ENCODE measurements at regions of chr10 and their contacts with region 1.

Region 1: DNA sequence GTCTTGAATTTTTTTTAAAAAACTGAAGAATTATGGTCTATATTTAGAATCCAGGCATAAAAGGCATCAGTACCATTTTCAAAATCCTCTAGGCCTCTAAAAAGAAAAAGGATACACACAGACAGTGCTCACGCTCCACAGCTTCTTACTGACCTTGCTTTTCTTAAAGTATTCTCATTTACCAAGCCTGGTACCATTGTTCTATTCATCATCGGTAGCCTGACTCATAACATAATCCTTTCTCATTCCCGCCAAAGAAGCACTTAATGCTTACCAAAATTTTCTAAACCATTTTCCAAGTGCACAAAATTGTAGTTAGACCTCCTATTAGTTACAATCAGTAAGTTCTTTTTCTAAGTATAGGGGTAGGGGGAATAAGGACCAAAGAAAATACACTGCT is 54.6 kb downstream of the ATE1 start:
- DNase-seq: no peak
- H3K4me3 ChIP-seq: no peak overlapping the region
- H3K4me3 Mint-ChIP-seq: no peak overlapping the region
- H3K27ac ChIP-seq: no peak overlapping the region
- H3K27ac Mint-ChIP-seq: peak overlapping the region in 1 of 7 donors; percentile 57
- H3K4me1 ChIP-seq: no peaks in the 10 kb centered on the region
- H3K4me1 Mint-ChIP-seq: no peaks in the 10 kb centered on the region
- H3K27me3 ChIP-seq: no peaks in the 10 kb centered on the region
- H3K27me3 Mint-ChIP-seq: no peaks in the 10 kb centered on the region

Region 2: GRCh38 chr10:121804460-121804859 is 68.8 kb before region 1 on chr10:
- CTCF ChIA-PET with region 1: no interaction called
- POLR2A ChIA-PET with region 1: no interaction called
- intact Hi-C with region 1: loop called (anchors 2 kb)
- DNase-seq: no peak
- H3K4me3 ChIP-seq: no peak overlapping the region
- H3K4me3 Mint-ChIP-seq: no peak overlapping the region
- H3K27ac ChIP-seq: no peak overlapping the region
- H3K27ac Mint-ChIP-seq: no peak overlapping the region
- H3K4me1 ChIP-seq: no peaks in the 10 kb centered on the region
- H3K4me1 Mint-ChIP-seq: peaks cover 0 to 4% (median 0%) of the 10 kb centered on the region in 4 donors
- H3K27me3 ChIP-seq: no peaks in the 10 kb centered on the region
- H3K27me3 Mint-ChIP-seq: no peaks in the 10 kb centered on the region